ENCODE measurements at regions of chr11 and their contacts with region 1.

Region 1: DNA sequence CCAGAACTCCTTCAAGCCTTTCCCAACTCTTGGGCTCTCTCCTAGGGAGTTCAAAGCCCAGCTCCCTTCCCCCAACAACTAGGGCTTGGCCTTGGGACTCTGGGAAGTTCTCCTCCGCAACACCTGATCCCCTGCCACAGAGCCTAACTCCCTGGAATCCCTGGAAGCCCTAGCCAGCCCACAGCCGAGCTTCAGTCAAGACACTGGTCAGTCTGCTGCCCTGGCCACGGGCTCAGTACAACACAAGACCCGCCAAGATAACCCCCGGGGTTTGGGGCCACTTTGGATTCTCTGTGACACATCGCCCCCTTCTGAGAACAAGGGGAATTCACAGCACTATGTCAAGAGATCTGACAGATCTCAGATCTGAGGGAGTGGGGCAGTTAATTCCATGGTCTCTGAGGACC is 58.3 kb downstream of the SLC22A12 start:
- DNase-seq: no peak
- H3K4me3 Mint-ChIP-seq: no peak overlapping the region
- H3K27ac Mint-ChIP-seq: no peak overlapping the region
- H3K4me1 Mint-ChIP-seq: no peaks in the 10 kb centered on the region
- H3K27me3 Mint-ChIP-seq: peaks cover 23% of the 10 kb centered on the region

Region 2: DNA sequence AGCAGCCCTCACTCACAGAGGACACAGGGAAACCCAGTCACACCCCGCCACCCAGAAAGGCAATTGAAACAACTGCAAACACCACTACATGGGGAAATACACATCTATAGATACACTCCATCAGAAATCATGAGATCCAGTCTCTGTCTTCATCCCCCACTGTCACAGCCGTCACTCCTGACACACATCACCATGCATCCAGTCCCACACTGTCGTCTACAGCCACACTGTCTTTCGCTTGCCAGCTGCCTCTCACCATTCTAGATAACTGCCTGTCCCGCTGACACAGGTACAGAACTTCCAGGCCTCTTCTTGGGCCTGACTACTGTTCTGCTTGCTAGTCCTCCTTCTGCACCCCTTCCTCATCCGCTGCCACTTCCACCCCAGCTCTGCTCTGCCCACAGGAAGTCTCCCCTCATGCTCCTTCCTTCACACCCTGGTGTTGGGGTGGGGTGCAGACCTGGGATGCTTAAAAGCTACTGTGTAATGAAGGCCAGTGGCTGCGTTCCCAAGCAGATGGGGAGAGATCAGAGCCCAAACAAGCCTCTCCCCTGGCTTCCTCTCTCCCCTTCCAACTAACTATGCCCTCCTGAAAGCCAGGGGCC is 15.6 kb before region 1 on chr11:
- CTCF ChIA-PET with region 1: interaction called, 10 read pairs
- POLR2A ChIA-PET with region 1: no interaction called
- DNase-seq: no peak
- H3K4me3 Mint-ChIP-seq: no peak overlapping the region
- H3K27ac Mint-ChIP-seq: peak overlapping the region; percentile 34
- H3K4me1 Mint-ChIP-seq: peaks cover 15% of the 10 kb centered on the region
- H3K27me3 Mint-ChIP-seq: no peaks in the 10 kb centered on the region

Region 3: DNA sequence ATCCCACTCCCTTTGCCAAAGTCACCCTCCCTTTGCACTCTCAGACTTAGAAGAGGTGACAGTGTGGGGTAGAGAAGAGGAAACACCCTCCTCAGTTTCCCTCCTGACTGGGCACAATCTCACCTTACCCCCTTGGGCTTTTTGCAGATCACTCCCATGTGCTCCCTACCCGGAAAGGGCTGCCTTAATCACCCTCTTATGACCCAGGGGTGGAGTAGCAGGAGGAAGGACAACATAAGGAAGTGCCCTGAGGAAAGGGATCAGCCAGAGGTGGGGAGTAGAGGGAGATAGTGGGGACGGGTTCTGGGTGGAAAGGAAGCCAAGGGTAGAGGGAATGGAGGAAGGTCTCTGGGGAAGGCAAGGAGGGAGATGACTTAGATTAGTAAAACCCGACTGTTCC is 21.7 kb after region 1 on chr11:
- CTCF ChIA-PET with region 1: no interaction called
- POLR2A ChIA-PET with region 1: no interaction called
- DNase-seq: no peak
- H3K4me3 Mint-ChIP-seq: no peak overlapping the region
- H3K27ac Mint-ChIP-seq: no peak overlapping the region
- H3K4me1 Mint-ChIP-seq: no peaks in the 10 kb centered on the region
- H3K27me3 Mint-ChIP-seq: peaks cover 23% of the 10 kb centered on the region